ENCODE measurements at regions of chr12 and their contacts with region 1.

Region 1: DNA sequence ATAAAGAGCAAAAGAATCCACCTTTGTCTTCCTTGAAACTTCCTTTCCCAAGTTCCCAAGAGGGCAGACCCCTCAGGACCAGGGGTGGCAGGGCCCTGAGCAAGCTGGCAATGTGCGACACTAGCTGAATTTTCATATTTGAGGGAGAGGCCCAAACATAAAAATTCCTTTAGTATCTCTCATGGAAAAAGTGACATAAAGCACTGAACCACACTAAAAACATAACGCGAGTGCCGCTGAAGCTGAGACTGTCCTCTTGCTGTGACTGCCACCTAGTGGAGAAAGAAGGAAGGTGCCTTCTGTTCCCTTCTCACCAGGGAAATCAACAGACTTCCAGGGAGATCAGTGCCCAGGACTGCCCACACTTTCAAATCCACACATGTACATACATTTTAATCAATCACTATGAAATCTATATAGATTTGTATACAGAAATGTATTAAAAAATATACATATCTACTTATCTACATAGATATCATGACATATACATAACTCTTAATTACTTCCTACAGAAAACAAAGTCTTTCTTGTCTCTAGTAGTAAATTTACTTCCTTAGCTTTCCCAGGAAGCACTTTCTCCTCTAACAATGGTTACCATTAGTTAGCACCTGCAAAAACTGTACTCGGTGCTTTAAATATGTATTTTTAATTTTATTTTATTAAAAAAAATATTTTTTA is 53.8 kb downstream of the SSH1 start:
- DNase-seq: peak in 3 of 4 donors; percentile 76 to 91 (median 83)
- ATAC-seq: peak; percentile 90
- H3K4me3 ChIP-seq: no peak overlapping the region
- H3K27ac ChIP-seq: peak overlapping the region; percentile 74 to 90
- H3K4me1 ChIP-seq: peaks cover 3 to 34% of the 10 kb centered on the region in 2 donors
- H3K27me3 ChIP-seq: no peaks in the 10 kb centered on the region
- CTCF ChIP-seq: peak; percentile 95 to 96

Region 2: GRCh38 chr12:108565976-108566375 is 237.6 kb before region 1 on chr12:
- intact Hi-C with region 1: loop called in 1 of 2 experiments (anchors 5 kb)
- DNase-seq: peak in 2 of 4 donors; percentile 87 to 89
- ATAC-seq: peak; percentile 5
- H3K4me3 ChIP-seq: no peak overlapping the region
- H3K27ac ChIP-seq: peak overlapping the region; percentile 45 to 77
- H3K4me1 ChIP-seq: peaks cover 19 to 56% of the 10 kb centered on the region in 2 donors
- H3K27me3 ChIP-seq: no peaks in the 10 kb centered on the region
- CTCF ChIP-seq: no peak

Region 3: DNA sequence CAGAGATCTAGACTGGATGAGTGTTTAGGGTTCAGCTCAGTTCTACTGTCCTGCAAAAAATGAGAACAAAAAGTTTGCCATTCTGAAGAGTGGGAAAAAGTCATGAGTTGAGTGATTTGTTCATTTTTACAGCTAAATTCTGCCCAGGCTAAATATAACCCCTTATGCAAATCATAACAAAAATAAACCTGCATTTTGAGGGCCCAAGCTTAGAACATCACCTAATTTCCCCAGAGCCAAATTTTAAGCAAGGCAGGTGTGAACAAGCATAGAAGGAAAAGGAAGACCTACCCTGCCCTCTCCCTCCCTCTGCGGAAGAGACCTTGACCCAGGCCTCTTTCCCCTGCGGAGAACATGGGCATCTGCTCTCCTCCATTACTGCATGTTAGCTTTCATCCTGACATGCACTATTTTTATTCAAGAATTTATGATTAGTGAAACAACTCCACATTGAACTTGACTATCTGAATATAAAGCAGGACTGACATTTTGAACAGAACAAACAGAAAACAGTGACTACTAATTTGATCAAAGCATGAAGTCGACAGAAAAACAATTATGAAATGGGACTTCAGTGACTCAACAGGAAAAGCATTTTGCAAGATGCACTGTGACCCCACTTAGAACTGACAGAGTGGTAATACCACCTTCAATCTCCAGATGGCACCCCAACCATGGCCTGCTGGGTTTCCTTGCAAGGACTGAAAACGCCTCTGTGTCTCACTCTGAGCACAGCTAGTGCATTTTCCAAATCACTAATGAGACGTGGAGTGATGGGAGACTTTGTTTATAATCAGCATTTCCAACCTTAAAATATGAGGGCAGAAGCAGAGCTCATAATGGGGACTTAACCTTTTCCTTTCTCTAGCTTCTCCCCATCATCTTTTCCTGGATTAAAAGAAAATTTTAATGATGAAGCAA is 139.0 kb before region 1 on chr12:
- intact Hi-C with region 1: loop called in 1 of 2 experiments (anchors 5 kb)
- DNase-seq: peak in 3 of 4 donors; percentile 86 to 93 (median 87)
- ATAC-seq: peak; percentile 98
- H3K4me3 ChIP-seq: peak overlapping the region in 1 of 2 donors; percentile 6
- H3K27ac ChIP-seq: peak overlapping the region; percentile 79 to 86
- H3K4me1 ChIP-seq: peaks cover 28 to 66% of the 10 kb centered on the region in 2 donors
- H3K27me3 ChIP-seq: no peaks in the 10 kb centered on the region
- CTCF ChIP-seq: peak; percentile 88 to 93

Measured in left lung (tissue), 14 donors.